ENCODE measurements at regions of chr7 and their contacts with region 1.

Region 1: GRCh38 chr7:80740778-80741545 is 102.5 kb downstream of the CD36 start:
- DNase-seq: peak; percentile 63
- ATAC-seq: peak; percentile 77
- H3K4me3 ChIP-seq: peak overlapping the region; percentile 22; the same call in 1 of the 2 replicates
- H3K27ac ChIP-seq: peak overlapping the region; percentile 39
- H3K4me1 ChIP-seq: peaks cover 28% of the 10 kb centered on the region
- H3K27me3 ChIP-seq: no peaks in the 10 kb centered on the region
- CTCF ChIP-seq: no peak

Region 2: GRCh38 chr7:80362010-80362618 is 378.8 kb before region 1 on chr7:
- CTCF ChIA-PET with region 1: no interaction called
- POLR2A ChIA-PET with region 1: no interaction called
- intact Hi-C with region 1: no loop called
- DNase-seq: peak; percentile 65
- ATAC-seq: peak; percentile 77
- H3K4me3 ChIP-seq: peak overlapping the region; percentile 36; the same call in 1 of the 2 replicates
- H3K27ac ChIP-seq: peak overlapping the region; percentile 95
- H3K4me1 ChIP-seq: peaks cover 29% of the 10 kb centered on the region
- H3K27me3 ChIP-seq: no peaks in the 10 kb centered on the region
- CTCF ChIP-seq: no peak

Region 3: GRCh38 chr7:80379034-80379982 is 361.7 kb before region 1 on chr7:
- CTCF ChIA-PET with region 1: no interaction called
- POLR2A ChIA-PET with region 1: no interaction called
- intact Hi-C with region 1: no loop called
- DNase-seq: peak; percentile 77
- ATAC-seq: peak; percentile 83
- H3K4me3 ChIP-seq: no peak overlapping the region
- H3K27ac ChIP-seq: peak overlapping the region; percentile 56
- H3K4me1 ChIP-seq: peaks cover 33% of the 10 kb centered on the region
- H3K27me3 ChIP-seq: no peaks in the 10 kb centered on the region
- CTCF ChIP-seq: no peak

Region 4: GRCh38 chr7:80851894-80852476 is 111.0 kb after region 1 on chr7:
- CTCF ChIA-PET with region 1: no interaction called
- POLR2A ChIA-PET with region 1: no interaction called
- intact Hi-C with region 1: no loop called
- DNase-seq: peak; percentile 68
- ATAC-seq: peak; percentile 98
- H3K4me3 ChIP-seq: no peak overlapping the region
- H3K27ac ChIP-seq: no peak overlapping the region
- H3K4me1 ChIP-seq: peaks cover 10% of the 10 kb centered on the region
- H3K27me3 ChIP-seq: no peaks in the 10 kb centered on the region
- CTCF ChIP-seq: no peak

Region 5: DNA sequence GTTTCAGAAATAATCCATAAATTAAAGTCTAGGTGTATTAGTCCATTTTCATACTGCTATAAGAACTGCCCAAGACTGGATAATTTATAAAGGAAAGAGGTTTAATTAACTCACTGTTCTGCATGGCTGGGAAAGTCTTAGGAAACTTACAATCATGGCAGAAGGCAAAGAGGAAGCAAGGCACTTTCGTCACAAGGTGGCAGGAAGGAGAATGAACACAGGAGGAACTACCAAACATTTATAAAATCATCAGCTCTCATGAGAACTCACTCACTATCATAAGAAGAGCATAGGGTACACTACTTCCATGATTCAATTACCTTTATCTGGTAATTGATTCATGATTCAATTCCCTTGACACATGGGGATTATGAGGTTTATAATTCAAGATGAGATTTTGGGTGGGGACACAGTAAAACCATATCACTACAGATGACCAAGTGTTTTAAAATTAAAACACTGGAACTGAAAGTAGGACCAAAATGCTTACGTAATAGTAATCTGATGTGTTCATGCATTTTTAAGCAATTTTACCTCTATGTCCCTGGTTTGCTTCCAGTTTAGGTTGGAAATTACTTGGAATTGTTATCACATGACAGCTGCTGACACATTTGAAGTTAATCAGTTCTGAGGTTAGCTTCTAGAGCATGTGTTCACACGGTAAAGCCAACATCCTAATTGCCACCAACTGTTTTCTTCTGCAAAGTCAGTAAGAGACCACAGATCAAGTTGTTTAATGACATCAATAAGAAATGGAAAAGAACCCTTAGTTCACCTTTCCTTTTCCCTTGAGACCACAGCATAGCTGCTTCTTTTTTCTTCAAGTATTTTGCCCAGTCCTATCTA is 226.3 kb after region 1 on chr7:
- CTCF ChIA-PET with region 1: no interaction called
- POLR2A ChIA-PET with region 1: no interaction called
- intact Hi-C with region 1: no loop called
- DNase-seq: no peak
- ATAC-seq: no peak
- H3K4me3 ChIP-seq: no peak overlapping the region
- H3K27ac ChIP-seq: no peak overlapping the region
- H3K4me1 ChIP-seq: no peaks in the 10 kb centered on the region
- H3K27me3 ChIP-seq: no peaks in the 10 kb centered on the region
- CTCF ChIP-seq: no peak

Region 6: GRCh38 chr7:81045491-81046030 is 304.6 kb after region 1 on chr7:
- CTCF ChIA-PET with region 1: no interaction called
- POLR2A ChIA-PET with region 1: interaction called, 13 read pairs
- intact Hi-C with region 1: no loop called
- DNase-seq: no peak
- ATAC-seq: no peak
- H3K4me3 ChIP-seq: no peak overlapping the region
- H3K27ac ChIP-seq: no peak overlapping the region
- H3K4me1 ChIP-seq: no peaks in the 10 kb centered on the region
- H3K27me3 ChIP-seq: no peaks in the 10 kb centered on the region
- CTCF ChIP-seq: no peak

Measured in PC-3 (cell line).